Uterus (tissue), 4 donors: ENCODE measurements at regions of chr14 and their contacts with region 1.

Region 1: DNA sequence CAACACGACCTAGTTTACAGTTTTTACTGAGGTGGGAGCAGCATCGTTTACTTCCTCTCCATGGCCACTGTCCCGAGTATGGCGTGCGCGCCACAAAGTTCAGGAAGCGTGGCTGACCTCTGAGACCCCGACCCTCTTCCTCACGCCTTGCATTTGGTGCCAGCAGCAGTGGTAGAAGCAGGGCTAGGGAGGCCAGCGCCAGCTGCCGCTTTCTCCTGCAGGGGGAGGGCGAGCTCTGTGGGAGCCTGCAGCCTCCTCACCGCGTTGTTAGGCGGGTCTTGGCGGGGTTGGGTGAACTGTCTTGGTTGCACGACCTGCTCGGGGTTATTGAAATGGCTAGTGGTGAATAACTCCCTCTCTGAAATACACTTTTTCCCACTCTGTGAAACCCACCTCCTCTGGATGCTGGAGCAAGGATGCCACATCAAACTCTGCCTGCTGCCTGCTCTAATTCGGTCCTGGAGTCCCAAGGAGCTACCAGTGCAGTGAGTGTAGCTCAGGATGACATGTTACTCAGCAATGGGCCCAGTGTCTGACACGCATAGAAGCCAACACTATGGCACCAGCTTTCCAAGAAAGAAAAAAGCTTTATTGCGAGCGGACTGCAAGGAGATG is 22.3 kb upstream of the TDRD9 start:
- DNase-seq: no peak
- H3K4me3 ChIP-seq: no peak overlapping the region
- H3K27ac ChIP-seq: no peak overlapping the region
- H3K4me1 ChIP-seq: no peaks in the 10 kb centered on the region
- H3K27me3 ChIP-seq: no peaks in the 10 kb centered on the region
- CTCF ChIP-seq: no peak
- POLR2A ChIP-seq: no peak

Region 2: GRCh38 chr14:103808403-103809001 is 97.4 kb before region 1 on chr14:
- intact Hi-C with region 1: loop called (anchors 10 kb)
- DNase-seq: peak; percentile 70 to 76
- H3K4me3 ChIP-seq: no peak overlapping the region
- H3K27ac ChIP-seq: no peak overlapping the region
- H3K4me1 ChIP-seq: no peaks in the 10 kb centered on the region
- H3K27me3 ChIP-seq: no peaks in the 10 kb centered on the region
- CTCF ChIP-seq: peak; percentile 78 to 88 (median 82)
- POLR2A ChIP-seq: no peak

Region 3: DNA sequence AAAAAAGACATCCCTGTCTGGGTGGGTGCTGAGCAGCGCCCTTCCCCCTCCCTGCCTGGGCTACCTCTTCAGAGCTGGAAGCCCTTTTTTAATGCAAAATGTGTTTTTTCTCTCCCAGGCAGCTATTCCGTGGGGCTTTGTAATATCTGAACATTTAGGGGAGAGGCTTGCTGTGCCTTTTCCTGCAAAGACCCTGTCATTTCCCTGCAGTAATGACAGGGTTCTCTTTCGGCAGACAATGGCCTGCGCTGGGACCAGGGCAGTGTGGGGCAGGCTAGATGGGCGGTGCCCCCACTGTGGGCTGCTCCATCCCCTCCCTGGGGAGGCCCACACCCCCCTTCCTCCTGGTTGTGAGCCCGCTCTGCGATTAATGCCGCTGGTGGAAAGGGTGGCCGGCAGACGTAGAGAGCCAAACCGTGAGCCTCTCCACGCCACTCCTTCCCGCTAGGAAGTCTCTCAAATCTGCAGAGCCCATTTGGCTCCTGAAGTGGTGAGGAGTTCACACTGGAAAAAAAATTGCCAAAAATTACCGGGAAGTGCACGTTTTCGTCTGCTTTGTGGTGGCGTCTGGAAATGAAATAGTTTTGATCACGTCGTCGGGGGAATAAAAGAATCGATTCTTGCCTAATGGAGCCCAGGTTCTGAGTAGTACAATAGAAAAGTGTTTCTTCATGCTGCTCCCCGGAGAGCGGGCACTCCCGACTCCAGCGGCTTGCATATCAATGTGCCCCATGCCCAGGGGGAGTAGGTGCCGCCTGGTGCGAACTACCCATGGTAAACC is 263.9 kb after region 1 on chr14:
- intact Hi-C with region 1: no loop called
- DNase-seq: no peak
- H3K4me3 ChIP-seq: no peak overlapping the region
- H3K27ac ChIP-seq: no peak overlapping the region
- H3K4me1 ChIP-seq: no peaks in the 10 kb centered on the region
- H3K27me3 ChIP-seq: no peaks in the 10 kb centered on the region
- CTCF ChIP-seq: no peak
- POLR2A ChIP-seq: no peak